MCF 10A (cell line): ENCODE measurements at regions of chr4 and their contacts with region 1.

Region 1: GRCh38 chr4:12729384-12729783 is 754.8 kb downstream of the RAB28 start:
- DNase-seq: peak; percentile 44
- H3K4me3 Mint-ChIP-seq: no peak overlapping the region
- H3K27ac Mint-ChIP-seq: no peak overlapping the region
- H3K4me1 Mint-ChIP-seq: peaks cover 3% of the 10 kb centered on the region
- H3K27me3 Mint-ChIP-seq: no peaks in the 10 kb centered on the region
- CTCF ChIP-seq: peak; percentile 51

Region 2: DNA sequence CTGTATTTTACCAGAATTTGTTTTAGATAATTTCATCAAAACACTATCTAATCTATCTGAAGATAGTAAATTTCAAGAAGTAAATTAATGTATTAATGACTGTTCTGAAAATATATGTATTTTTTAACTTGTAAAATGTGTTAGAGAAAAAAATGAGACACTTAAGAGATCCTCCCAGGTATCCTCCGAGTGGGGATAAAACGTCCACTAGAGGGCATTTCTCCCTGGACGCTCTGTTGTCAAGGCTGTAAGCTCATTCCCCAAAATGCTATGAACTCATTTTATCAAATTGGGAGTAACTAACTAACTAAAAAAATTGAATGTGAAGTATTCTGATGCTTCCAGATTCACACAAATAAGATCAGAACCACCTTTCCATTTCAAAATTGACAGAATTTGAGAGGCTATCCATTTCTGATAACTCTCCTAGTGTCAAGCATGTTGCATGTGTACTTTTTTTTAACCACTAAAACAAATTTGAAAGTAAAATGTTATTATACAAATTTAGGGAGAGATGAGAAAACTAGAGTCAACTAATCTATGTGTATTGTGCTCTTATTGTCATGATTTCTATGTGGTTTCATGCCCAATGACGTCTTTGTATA is 963.4 kb before region 1 on chr4:
- CTCF ChIA-PET with region 1: no interaction called
- POLR2A ChIA-PET with region 1: no interaction called
- intact Hi-C with region 1: loop called (anchors 10 kb)
- DNase-seq: peak; percentile 59
- H3K4me3 Mint-ChIP-seq: no peak overlapping the region
- H3K27ac Mint-ChIP-seq: no peak overlapping the region
- H3K4me1 Mint-ChIP-seq: no peaks in the 10 kb centered on the region
- H3K27me3 Mint-ChIP-seq: no peaks in the 10 kb centered on the region
- CTCF ChIP-seq: peak; percentile 65

Region 3: DNA sequence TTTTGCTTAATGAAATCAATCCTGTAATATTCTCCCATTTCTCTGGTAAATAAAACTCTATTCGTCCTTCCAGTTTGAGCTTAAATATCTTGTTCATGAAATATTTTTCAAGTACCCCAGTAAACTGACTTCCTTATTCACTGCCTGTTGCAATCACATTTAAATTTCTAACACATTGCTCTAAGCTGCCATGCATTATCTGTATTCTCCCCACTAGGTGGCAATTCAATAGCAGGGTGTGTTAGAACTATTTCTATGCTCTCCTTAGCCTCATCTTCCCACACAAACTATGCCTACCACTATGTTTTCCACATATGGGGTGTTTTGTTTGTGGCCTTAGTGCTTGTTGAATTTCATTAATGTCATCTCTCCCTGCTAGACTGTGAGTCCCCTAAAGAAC is 923.5 kb before region 1 on chr4:
- CTCF ChIA-PET with region 1: no interaction called
- POLR2A ChIA-PET with region 1: no interaction called
- intact Hi-C with region 1: loop called (anchors 10 kb)
- DNase-seq: peak; percentile 61
- H3K4me3 Mint-ChIP-seq: no peak overlapping the region
- H3K27ac Mint-ChIP-seq: no peak overlapping the region
- H3K4me1 Mint-ChIP-seq: no peaks in the 10 kb centered on the region
- H3K27me3 Mint-ChIP-seq: no peaks in the 10 kb centered on the region
- CTCF ChIP-seq: peak; percentile 64

Region 4: DNA sequence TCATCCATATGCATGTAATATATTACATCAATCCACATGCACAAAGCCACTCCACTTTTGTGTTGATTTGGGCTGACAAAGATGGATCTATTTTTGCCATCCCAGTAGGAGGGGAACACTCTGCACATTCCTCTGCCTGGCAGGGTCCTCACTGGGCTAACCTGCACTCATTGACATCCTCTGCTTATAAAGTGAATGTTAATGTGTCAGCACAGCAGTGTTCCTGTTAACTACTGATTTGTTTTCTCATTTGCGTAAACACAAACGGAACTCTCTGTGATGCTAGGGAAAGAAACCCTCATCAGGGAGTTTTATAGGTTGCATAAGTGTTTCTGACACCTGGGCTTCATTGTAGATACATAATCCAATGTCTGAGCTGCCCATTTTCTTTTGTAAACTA is 71.2 kb before region 1 on chr4:
- CTCF ChIA-PET with region 1: no interaction called
- POLR2A ChIA-PET with region 1: no interaction called
- intact Hi-C with region 1: no loop called
- DNase-seq: no peak
- H3K4me3 Mint-ChIP-seq: no peak overlapping the region
- H3K27ac Mint-ChIP-seq: no peak overlapping the region
- H3K4me1 Mint-ChIP-seq: no peaks in the 10 kb centered on the region
- H3K27me3 Mint-ChIP-seq: no peaks in the 10 kb centered on the region
- CTCF ChIP-seq: no peak

Region 5: GRCh38 chr4:12678948-12679616 is 50.3 kb before region 1 on chr4:
- CTCF ChIA-PET with region 1: interaction called, 29 read pairs
- POLR2A ChIA-PET with region 1: no interaction called
- intact Hi-C with region 1: loop called (anchors 1 kb)
- DNase-seq: peak; percentile 17
- H3K4me3 Mint-ChIP-seq: no peak overlapping the region
- H3K27ac Mint-ChIP-seq: no peak overlapping the region
- H3K4me1 Mint-ChIP-seq: peaks cover 10% of the 10 kb centered on the region
- H3K27me3 Mint-ChIP-seq: no peaks in the 10 kb centered on the region
- CTCF ChIP-seq: peak; percentile 24

Region 6: DNA sequence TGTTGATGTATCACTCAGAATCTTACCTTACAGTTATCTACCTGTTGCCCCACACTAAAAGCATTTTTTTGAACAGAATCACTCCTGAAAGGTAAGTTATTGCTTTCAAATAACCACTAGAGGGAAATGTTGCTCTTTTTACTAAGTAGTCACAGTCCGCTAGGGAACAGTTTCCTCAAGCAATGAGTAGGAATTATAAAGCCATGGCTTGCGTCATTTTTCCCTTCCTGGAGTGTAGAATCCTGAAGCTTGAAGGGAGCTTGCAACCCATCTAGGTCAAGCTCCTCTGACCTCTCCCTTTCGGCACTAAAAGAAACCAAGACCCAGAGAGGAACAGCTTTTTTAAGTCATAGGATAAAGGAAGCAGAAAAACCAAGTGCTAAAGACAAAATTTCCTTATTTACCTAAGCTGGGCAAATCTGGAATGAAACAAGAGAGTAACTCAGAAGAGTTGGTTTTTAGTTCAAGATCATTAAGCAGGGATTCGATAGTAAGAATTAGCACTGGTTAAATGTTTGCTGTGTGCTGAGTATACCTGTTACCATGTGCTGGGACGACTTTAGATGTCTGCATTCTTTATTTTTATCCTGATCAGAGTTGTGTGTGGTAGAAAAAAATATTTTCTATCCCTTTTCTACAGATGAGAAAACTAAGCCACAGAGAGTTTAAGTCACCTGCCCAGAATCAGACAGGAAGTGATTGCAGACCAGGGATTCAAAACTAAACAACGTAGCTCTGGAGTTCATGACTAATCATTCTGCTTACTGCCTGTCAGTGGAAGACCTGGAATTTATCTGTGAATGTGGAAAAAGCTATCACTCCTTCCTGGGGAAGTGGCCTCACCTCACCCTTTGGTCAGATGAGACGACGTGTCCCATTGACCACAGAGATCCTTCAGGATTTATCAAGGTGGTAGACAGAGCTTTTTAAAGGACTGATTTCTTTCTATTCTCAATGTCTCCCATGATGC is 123.2 kb after region 1 on chr4:
- CTCF ChIA-PET with region 1: interaction called, 5 read pairs
- POLR2A ChIA-PET with region 1: no interaction called
- intact Hi-C with region 1: loop called (anchors 1 kb)
- DNase-seq: peak; percentile 85
- H3K4me3 Mint-ChIP-seq: peak overlapping the region; percentile 16
- H3K27ac Mint-ChIP-seq: peak overlapping the region; percentile 93
- H3K4me1 Mint-ChIP-seq: peaks cover 7% of the 10 kb centered on the region
- H3K27me3 Mint-ChIP-seq: no peaks in the 10 kb centered on the region
- CTCF ChIP-seq: peak; percentile 64